SK-N-SH (cell line): ENCODE measurements at regions of chr1 and their contacts with region 1.

Region 1: DNA sequence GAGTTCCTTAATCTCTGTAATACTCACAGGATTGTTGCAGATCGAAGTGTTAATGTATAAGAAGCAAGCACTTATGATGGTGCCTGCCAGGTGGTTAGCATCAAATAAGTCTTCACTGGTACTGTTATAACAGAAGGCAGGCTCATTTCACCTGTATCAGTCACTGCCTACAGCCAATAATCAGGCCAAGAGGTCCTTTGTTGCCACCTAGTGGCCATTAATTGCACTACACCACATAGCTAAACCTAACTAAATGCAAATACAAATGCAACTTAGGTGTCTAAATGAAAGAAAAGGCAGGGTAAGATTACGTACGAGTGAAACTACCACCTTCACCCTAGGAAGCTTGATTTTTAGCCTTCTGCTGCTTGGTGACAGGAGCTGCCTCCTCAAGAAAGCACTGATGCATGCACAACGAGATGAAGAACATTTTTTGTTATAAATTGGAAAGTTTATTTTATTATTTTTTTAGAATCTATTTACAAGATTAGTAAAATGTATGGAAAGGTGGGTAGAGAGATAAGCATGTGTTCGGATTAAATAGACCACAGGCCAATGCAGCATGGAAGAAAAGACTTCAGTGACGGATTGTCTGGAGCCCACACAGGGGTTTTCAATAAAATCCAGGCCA is 334.8 kb upstream of the CAMK1G start:
- DNase-seq: peak; percentile 53
- H3K4me3 ChIP-seq: peak overlapping the region in 1 of 2 experiments; percentile 22; a peak in 1 of 4 replicates
- H3K27ac ChIP-seq: peak overlapping the region; percentile 41 to 98; a peak in 3 of 4 replicates
- H3K4me1 ChIP-seq: peaks cover 0 to 50% of the 10 kb centered on the region in 2 experiments; a peak in 2 of 4 replicates
- H3K27me3 ChIP-seq: no peaks in the 10 kb centered on the region
- CTCF ChIP-seq: peak; percentile 95
- EP300 ChIP-seq: no peak
- RAD21 ChIP-seq: peak; percentile 93

Region 2: DNA sequence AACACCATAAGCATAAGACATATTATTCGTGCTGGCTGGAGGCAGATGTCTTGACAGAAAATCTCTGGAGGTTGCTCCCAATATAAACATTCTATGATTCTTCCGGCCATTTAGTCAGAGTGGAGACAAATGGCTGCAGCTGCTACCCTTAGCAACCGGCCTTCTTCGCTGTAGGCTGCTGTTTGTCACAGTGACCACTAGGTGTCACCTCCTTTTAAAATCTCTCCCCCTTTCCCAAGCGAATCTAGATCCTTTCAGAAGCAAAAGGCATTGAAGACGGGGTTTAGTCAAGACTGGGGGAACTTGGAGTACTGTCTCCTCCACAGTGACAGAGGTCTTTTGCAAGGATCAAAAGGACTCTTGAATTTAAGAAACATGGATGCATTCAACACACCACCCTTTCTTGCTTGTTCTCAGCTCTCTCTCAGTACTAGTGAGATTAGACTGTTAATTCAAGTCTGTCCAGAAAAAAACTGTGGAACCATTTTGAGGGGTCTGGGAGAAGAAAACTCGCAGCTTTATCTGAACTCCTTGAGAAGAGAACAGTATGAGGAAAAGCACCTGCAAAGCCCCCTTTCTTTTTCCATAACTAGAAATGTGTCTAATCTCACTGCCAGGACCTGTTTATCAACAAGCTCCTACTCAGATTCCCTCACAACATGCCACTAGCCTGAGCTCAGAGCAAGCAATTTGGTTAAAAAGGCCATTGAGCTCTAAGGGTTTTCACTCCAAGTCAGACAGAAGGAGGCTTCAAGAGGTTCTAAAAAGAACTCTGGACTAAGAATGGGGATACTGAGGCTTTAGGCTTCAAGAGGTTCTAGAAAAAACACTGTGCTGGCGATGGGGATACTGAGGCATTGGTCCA is 596.2 kb before region 1 on chr1:
- CTCF ChIA-PET with region 1: interaction called, 10 read pairs
- POLR2A ChIA-PET with region 1: no interaction called
- DNase-seq: peak; percentile 80
- H3K4me3 ChIP-seq: no peak overlapping the region; a peak in 1 of 4 replicates
- H3K27ac ChIP-seq: peak overlapping the region in 1 of 2 experiments; percentile 73; a peak in 2 of 4 replicates
- H3K4me1 ChIP-seq: peaks cover 0 to 7% of the 10 kb centered on the region in 2 experiments; a peak in 2 of 4 replicates
- H3K27me3 ChIP-seq: no peaks in the 10 kb centered on the region
- CTCF ChIP-seq: peak; percentile 86
- EP300 ChIP-seq: 0 out of 4 replicates have a peak, but pooled peaks of 1 of the 2 experiments have one; percentile 24
- RAD21 ChIP-seq: peak; percentile 91

Region 3: DNA sequence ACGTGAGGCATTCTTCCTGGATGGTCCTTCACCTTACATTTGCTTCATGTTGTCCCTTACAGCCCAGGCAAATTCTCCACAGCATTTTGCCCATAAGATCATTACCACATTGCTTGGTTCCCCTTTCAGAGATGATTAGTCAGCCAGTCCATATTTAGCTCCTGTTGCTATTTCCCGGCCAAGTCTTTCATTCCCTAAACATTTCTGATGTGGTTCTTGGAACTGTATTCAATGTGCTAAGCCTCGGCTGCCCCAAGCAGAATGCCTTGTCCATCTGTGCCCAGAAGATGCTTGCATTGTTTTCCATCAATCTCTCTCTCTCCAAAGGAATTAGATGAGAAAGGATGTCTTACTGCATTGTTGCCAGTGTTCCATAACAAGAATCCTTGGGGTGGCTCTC is 86.1 kb before region 1 on chr1:
- CTCF ChIA-PET with region 1: no interaction called
- POLR2A ChIA-PET with region 1: no interaction called
- DNase-seq: no peak
- H3K4me3 ChIP-seq: no peak overlapping the region
- H3K27ac ChIP-seq: peak overlapping the region in 1 of 2 experiments; percentile 65; a peak in 1 of 4 replicates
- H3K4me1 ChIP-seq: no peaks in the 10 kb centered on the region; a peak in 1 of 4 replicates
- H3K27me3 ChIP-seq: no peaks in the 10 kb centered on the region
- CTCF ChIP-seq: no peak
- EP300 ChIP-seq: peak in 1 of 2 experiments; percentile 26; a peak in 1 of 4 replicates
- RAD21 ChIP-seq: no peak

Region 4: DNA sequence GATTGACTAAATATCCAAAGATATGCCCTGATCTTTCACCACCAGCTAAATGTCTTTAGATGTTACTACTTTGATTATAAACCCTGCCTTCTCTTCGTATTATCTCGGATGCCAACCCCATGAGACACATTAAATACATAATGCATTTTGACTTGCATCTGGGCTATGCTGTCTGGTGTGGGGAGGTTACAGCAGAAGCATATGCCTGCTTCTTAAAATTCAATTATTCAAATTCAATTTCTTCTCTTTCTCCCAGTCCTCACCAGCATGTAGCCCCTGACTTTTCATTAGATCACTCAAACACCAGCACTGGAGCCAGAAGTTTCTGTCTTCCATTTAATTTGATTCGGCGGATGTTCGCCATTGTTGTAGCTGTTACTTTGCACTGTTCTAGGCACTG is 25.9 kb before region 1 on chr1:
- CTCF ChIA-PET with region 1: interaction called, 18 read pairs
- POLR2A ChIA-PET with region 1: no interaction called
- DNase-seq: peak; percentile 87
- H3K4me3 ChIP-seq: no peak overlapping the region
- H3K27ac ChIP-seq: peak overlapping the region in 1 of 2 experiments; percentile 97; a peak in 2 of 4 replicates
- H3K4me1 ChIP-seq: peaks cover 0 to 48% of the 10 kb centered on the region in 2 experiments; a peak in 2 of 4 replicates
- H3K27me3 ChIP-seq: no peaks in the 10 kb centered on the region
- CTCF ChIP-seq: no peak
- EP300 ChIP-seq: peak in 1 of 2 experiments; percentile 95; a peak in 2 of 4 replicates
- RAD21 ChIP-seq: no peak; the same call in none of the 2 replicates

Region 5: GRCh38 chr1:209260136-209260535 is 11.4 kb after region 1 on chr1:
- CTCF ChIA-PET with region 1: interaction called, 24 read pairs
- POLR2A ChIA-PET with region 1: interaction called, 3 read pairs
- DNase-seq: no peak
- H3K4me3 ChIP-seq: no peak overlapping the region
- H3K27ac ChIP-seq: no peak overlapping the region
- H3K4me1 ChIP-seq: peaks cover 0 to 1% of the 10 kb centered on the region in 2 experiments; a peak in 1 of 4 replicates
- H3K27me3 ChIP-seq: no peaks in the 10 kb centered on the region
- CTCF ChIP-seq: no peak
- EP300 ChIP-seq: no peak
- RAD21 ChIP-seq: no peak

Region 6: DNA sequence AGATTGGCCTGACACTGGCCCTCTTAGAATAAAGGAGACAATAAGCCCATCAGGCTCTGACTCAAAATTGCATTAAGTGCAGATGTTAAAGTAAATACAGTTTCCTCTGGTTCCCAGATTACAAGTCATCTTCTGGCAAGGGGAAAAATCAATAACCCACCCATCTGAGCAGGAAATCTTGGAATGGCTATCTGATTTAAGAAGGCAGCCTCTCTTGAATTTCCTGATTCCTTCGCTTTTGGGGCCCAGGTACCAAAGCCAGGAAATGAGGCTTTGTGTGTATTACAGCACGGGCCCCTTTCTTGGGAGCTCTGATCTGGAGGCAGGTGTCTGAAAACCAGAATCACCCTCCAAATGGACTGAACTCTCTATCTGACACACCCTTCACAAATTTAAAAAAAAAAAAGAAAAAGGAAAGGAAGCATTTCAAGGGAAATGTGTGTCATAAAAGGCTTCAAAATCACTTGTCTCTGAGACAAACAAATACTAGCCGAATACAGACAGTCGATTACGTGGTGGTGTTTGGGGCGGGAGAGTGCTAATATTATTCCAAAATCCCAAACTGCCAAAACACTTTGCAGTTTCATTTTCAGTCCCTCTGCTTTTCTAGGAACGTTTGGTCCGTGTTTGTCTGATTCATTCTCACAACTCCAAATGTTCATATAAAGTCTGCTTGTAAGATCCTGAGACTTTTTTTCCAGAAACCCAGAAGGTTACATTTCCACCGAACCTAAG is 93.8 kb after region 1 on chr1:
- CTCF ChIA-PET with region 1: interaction called, 133 read pairs
- POLR2A ChIA-PET with region 1: no interaction called
- DNase-seq: no peak
- H3K4me3 ChIP-seq: no peak overlapping the region
- H3K27ac ChIP-seq: no peak overlapping the region
- H3K4me1 ChIP-seq: peaks cover 0 to 25% of the 10 kb centered on the region in 2 experiments; a peak in 2 of 4 replicates
- H3K27me3 ChIP-seq: no peaks in the 10 kb centered on the region
- CTCF ChIP-seq: no peak
- EP300 ChIP-seq: no peak
- RAD21 ChIP-seq: no peak

Region 7: GRCh38 chr1:209513226-209513625 is 264.5 kb after region 1 on chr1:
- CTCF ChIA-PET with region 1: interaction called, 15 read pairs
- POLR2A ChIA-PET with region 1: no interaction called
- DNase-seq: peak; percentile 49
- H3K4me3 ChIP-seq: no peak overlapping the region; a peak in 1 of 4 replicates
- H3K27ac ChIP-seq: no peak overlapping the region
- H3K4me1 ChIP-seq: no peaks in the 10 kb centered on the region
- H3K27me3 ChIP-seq: no peaks in the 10 kb centered on the region
- CTCF ChIP-seq: peak; percentile 69
- EP300 ChIP-seq: no peak
- RAD21 ChIP-seq: peak; percentile 82